ENCODE measurements at regions of chr10 and their contacts with region 1.

Region 1: DNA sequence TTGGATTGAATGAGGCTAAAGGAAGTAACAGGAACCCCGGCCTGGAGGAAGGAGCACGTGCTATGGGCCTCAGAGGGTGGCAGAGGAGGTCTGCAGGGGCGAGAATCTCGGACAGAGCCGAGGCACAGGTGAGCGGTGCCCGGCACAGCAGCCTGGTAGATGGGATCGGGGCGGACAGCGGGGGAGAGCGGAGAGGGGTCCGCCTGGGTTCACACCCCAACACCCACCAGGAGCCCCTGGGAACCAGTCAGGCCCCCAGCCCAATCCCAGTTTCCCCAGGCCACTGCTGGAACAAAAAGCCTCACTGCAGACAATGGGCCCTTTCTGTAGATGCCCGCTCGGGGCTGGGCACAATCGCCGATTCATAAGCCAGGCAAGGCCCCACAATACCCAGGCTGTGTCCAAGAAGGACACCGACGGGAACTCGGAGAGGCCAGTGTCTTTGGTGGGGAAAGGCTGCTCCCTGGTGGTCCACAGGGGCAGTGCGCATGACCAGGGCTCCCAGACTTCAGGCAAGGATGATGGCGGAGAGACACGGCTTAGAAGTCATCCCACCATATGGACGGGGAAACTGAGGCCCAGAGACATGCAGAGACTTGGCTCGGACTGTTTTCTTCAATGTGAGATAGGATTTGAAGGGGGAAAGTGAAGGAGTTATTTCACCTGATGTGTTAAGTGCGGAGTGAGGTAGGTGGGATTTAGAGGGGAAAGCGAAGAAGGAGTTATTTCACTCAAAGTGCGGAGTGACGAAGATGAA is 106.9 kb upstream of the GPR26 start:
- DNase-seq: peak; percentile 86

Region 2: DNA sequence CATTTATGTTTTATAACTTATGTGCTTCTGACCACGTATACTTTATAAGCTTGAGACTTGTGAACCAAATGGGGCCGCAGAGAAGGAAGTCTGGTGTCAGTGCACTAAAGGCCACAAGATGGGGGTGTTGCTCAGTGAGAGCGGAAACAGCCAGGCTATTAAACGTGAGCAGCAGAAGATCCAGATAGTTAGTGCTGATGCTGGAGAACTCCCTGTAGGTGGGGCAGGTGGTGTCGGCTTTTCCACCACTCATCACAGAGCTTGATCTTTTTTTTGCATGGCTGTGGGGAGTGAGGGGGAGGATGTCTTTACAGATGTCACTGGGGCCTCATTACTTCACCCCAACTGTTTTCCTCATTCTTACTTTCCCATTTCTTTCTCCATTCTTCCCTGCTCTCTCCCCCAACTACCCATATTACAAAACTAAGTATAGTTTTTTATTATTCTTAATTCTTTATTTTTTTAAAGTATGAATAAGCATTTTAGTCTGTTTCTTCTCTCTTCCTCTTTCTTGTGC is 515.8 kb before region 1 on chr10:
- intact Hi-C with region 1: loop called (anchors 5 kb)
- DNase-seq: no peak

Region 3: DNA sequence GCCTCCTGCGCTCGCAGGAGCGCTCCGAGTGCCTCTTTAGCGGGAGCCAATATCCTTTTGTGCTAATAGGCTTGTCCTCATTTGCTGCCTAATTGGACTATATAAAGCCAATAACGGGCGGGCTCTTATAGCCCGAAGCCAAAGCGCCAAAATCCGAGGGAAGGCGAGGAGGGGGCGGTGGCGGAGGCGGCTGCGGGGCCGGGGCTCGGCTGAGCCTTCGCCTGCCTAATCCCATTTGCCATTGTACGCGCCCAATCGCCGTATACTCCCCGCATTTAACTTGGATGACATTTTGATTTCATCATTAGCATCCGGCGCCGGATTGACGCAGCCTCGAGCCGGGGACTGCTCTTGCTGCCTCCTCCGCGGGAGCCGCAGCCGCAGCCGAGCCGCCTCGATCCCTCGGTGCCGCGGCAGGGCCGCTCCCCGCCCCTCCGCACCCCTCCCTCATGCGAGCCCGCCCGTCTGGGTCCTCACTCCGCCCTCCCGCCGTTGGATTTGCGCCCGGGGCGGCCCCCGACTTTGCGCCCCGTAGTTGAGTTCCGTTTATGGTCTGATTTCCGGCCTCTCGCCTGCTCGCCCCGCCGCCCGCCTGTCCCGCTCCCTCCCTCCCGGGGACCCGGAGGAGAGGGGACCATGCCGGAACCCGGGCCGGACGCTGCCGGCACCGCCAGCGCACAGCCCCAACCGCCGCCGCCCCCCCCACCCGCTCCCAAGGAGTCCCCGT is 423.7 kb before region 1 on chr10 and contains the start of gene HMX3:
- intact Hi-C with region 1: loop called (anchors 2 kb)
- DNase-seq: no peak
- total RNA-seq, gene HMX3: not detected

Measured in cardiac septum (tissue), 1 donor.